CD4-positive, alpha-beta T cell (primary cell): ENCODE measurements at regions of chr1 and their contacts with region 1.

Region 1: GRCh38 chr1:153352523-153352922 is 3.9 kb upstream of the PGLYRP4 start:
- DNase-seq: peak; percentile 29 to 80 (median 52)
- ATAC-seq: peak; percentile 75
- H3K4me3 ChIP-seq: no peak overlapping the region
- H3K4me3 Mint-ChIP-seq: no peak overlapping the region
- H3K27ac ChIP-seq: no peak overlapping the region
- H3K27ac Mint-ChIP-seq: no peak overlapping the region
- H3K4me1 ChIP-seq: peaks cover 10% of the 10 kb centered on the region
- H3K4me1 Mint-ChIP-seq: peaks cover 15% of the 10 kb centered on the region
- H3K27me3 ChIP-seq: peaks cover 0 to 3% of the 10 kb centered on the region in 2 experiments
- H3K27me3 Mint-ChIP-seq: peaks cover 22% of the 10 kb centered on the region
- CTCF ChIP-seq: peak; percentile 96

Region 2: DNA sequence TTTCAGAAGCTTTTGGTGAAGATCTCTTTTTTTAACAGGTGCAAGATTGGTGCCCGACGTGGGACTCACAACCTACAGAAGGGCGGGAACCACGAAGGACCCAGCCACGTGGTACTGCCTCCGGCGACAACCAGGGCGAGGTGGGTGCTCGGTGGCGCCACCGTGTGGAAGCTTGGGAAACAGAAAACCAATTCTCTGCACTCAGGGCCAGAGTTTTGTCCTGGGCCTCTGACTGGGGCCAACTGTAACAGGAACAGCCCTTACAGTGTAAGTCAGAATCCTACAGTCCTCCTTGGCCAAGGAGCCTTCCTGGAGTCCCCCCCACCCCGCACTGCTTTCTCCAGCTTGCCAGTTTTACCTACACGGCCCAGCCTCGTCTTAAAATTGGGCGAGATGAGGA is 52.2 kb after region 1 on chr1:
- CTCF ChIA-PET with region 1: interaction called, 3 read pairs
- POLR2A ChIA-PET with region 1: no interaction called
- intact Hi-C with region 1: loop called (anchors 1 kb)
- DNase-seq: peak; percentile 25 to 76 (median 44)
- ATAC-seq: peak; percentile 65
- H3K4me3 ChIP-seq: no peak overlapping the region
- H3K4me3 Mint-ChIP-seq: no peak overlapping the region
- H3K27ac ChIP-seq: no peak overlapping the region
- H3K27ac Mint-ChIP-seq: no peak overlapping the region
- H3K4me1 ChIP-seq: peaks cover 9% of the 10 kb centered on the region
- H3K4me1 Mint-ChIP-seq: peaks cover 10% of the 10 kb centered on the region
- H3K27me3 ChIP-seq: peaks cover 0 to 11% of the 10 kb centered on the region in 2 experiments
- H3K27me3 Mint-ChIP-seq: peaks cover 16% of the 10 kb centered on the region
- CTCF ChIP-seq: peak; percentile 64

Region 3: DNA sequence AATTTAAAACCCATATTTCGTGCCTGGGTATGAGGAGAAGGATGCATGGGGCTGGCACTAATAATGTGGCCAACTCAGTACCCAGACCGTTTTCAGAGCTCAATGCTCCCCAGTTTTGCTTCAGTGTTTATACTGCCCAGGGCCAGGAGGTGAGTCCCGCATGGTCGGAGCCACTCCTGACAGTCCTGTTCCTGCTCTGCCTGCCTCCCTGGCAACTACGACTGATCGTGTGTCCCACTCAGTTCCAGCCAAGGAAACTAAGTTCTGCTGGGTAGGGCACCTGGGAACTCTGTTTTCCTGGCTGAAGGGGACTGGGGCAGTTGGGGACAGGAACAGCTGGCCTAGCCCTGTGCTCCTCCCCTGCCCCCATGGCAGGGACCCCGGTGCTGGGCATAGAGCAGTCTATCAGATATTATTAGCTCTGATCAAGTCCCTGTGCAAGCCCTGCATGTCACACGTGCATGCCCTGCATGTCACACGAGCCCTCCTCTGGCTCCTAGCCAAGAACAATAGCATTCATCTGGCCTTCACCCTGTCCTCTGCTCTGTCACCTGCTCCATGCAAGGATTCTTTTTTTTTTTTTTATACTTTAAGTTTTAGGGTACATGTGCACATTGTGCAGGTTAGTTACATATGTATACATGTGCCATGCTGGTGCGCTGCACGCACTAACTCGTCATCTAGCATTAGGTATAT is 88.9 kb after region 1 on chr1:
- CTCF ChIA-PET with region 1: no interaction called
- POLR2A ChIA-PET with region 1: no interaction called
- intact Hi-C with region 1: no loop called
- DNase-seq: no peak
- ATAC-seq: no peak
- H3K4me3 ChIP-seq: no peak overlapping the region
- H3K4me3 Mint-ChIP-seq: no peak overlapping the region
- H3K27ac ChIP-seq: no peak overlapping the region
- H3K27ac Mint-ChIP-seq: no peak overlapping the region
- H3K4me1 ChIP-seq: no peaks in the 10 kb centered on the region
- H3K4me1 Mint-ChIP-seq: no peaks in the 10 kb centered on the region
- H3K27me3 ChIP-seq: peaks cover 7 to 8% of the 10 kb centered on the region in 2 experiments
- H3K27me3 Mint-ChIP-seq: peaks cover 42% of the 10 kb centered on the region
- CTCF ChIP-seq: no peak

Region 4: DNA sequence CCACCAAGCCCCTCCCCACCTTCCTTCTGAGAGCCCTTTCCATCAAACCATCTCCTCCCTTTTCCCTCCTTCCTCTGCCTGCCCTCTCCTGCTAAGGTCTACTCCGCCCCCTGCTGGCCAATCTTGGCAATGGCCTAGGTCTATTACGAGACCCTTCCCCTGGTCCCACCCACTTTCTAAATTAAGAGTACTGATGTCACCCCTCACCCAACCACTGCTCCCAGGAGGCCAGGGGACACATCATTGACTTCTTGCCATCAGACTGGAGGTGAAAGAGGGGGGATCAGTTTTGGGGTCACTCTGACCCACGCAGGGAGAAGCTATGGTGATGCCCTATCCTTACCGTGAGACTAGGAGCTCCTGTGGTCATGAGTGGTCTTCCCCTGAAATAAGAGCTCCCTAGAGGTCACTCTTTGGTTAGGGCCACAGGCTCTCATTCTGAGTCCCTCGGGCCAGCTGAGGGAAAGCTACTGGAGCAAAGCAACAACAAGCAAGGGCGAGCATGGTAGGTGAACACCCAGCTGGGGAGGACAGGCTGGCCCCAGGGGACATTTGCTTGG is 142.5 kb after region 1 on chr1:
- CTCF ChIA-PET with region 1: interaction called, 10 read pairs
- POLR2A ChIA-PET with region 1: no interaction called
- intact Hi-C with region 1: loop called in 1 of 2 experiments (anchors 1 kb)
- DNase-seq: peak; percentile 55 to 82 (median 68)
- ATAC-seq: peak; percentile 72
- H3K4me3 ChIP-seq: no peak overlapping the region
- H3K4me3 Mint-ChIP-seq: no peak overlapping the region
- H3K27ac ChIP-seq: no peak overlapping the region
- H3K27ac Mint-ChIP-seq: no peak overlapping the region
- H3K4me1 ChIP-seq: peaks cover 3% of the 10 kb centered on the region
- H3K4me1 Mint-ChIP-seq: no peaks in the 10 kb centered on the region
- H3K27me3 ChIP-seq: peaks cover 2 to 11% of the 10 kb centered on the region in 2 experiments
- H3K27me3 Mint-ChIP-seq: peaks cover 39% of the 10 kb centered on the region
- CTCF ChIP-seq: peak; percentile 90

Region 5: DNA sequence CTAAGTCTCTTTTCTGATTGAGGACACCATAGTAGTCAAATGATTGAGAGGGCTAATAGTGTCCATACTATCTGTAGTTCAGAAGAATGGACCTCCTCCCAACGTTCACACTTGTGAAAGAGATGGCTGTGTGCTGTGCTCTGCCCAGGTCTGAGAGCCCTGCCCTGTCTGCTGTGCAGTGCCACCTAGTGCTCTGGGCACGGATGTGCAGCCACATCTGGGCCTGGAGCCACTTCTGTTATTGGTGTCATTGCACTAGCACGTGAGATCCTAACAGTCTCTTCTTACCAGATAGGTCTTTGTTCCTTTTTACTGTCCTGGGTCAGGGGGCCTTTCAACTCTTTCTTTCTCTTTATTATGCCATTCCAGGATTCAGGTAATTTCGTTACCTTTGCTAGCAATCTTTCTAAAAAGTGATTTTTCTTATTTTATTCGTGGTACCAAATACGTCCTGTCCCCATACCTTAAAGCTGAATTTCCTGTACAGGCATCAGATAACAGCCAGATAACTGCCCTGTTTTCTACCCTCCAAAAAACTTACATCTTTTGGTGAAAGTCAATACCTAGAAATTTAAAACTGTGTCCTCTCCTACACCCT is 397.0 kb after region 1 on chr1:
- CTCF ChIA-PET with region 1: no interaction called
- POLR2A ChIA-PET with region 1: no interaction called
- intact Hi-C with region 1: loop called in 1 of 2 experiments (anchors 10 kb)
- DNase-seq: peak; percentile 67 to 87 (median 75)
- ATAC-seq: peak; percentile 100
- H3K4me3 ChIP-seq: no peak overlapping the region
- H3K4me3 Mint-ChIP-seq: no peak overlapping the region
- H3K27ac ChIP-seq: no peak overlapping the region
- H3K27ac Mint-ChIP-seq: peak overlapping the region; percentile 3
- H3K4me1 ChIP-seq: no peaks in the 10 kb centered on the region
- H3K4me1 Mint-ChIP-seq: peaks cover 6% of the 10 kb centered on the region
- H3K27me3 ChIP-seq: no peaks in the 10 kb centered on the region
- H3K27me3 Mint-ChIP-seq: no peaks in the 10 kb centered on the region
- CTCF ChIP-seq: peak; percentile 95